CD8-positive, alpha-beta T cell (primary cell): ENCODE measurements at regions of chr1 and their contacts with region 1.

Region 1: GRCh38 chr1:160951443-160952128 is 3.0 kb downstream of the ITLN2 start:
- DNase-seq: peak; percentile 42 to 83 (median 73)
- ATAC-seq: peak; percentile 91
- H3K4me3 ChIP-seq: no peak overlapping the region
- H3K4me3 Mint-ChIP-seq: no peak overlapping the region
- H3K27ac ChIP-seq: no peak overlapping the region
- H3K27ac Mint-ChIP-seq: no peak overlapping the region
- H3K4me1 ChIP-seq: peaks cover 8% of the 10 kb centered on the region
- H3K4me1 Mint-ChIP-seq: peaks cover 12% of the 10 kb centered on the region
- H3K27me3 ChIP-seq: no peaks in the 10 kb centered on the region
- H3K27me3 Mint-ChIP-seq: no peaks in the 10 kb centered on the region
- CTCF ChIP-seq: peak; percentile 79

Region 2: DNA sequence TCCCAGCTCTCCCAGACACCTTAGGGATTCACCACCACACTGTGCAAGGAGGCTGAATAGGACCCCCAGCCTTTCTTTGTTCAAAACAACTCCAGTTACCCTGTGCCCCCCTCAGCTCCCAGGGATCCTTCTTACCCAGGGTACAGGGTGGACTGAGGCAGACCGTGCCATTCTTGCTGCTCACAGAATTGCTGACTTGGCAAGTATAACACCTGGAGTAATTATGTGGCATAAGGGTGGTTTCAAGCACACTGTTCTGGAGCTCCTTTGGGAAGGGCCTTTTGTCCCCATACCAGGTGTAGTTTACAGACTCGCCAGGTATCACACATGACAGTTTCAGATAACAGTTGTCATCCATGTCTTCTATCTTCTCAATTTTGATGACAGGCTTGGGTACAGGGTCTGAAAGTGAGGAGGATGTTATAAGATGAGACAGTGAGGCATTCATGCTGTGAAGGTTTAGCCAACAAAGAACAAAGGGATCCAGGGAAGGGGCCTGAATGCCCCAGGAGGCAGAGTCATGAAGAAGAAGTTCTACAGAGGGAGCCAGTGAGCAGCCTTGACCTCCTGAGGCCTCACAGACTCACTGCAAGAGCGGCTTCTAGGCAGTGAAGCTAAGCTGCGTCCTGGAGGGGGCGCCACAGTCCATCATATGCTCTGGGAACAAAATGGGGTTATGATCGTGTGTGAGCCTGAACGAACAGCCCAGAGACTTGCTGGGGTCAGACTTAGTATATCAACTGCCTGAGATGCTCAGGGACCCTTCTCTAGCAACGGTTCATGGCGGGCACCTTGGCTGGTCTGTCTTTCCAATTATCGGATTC is 270.3 kb before region 1 on chr1:
- CTCF ChIA-PET with region 1: interaction called, 23 read pairs
- POLR2A ChIA-PET with region 1: no interaction called
- intact Hi-C with region 1: loop called (anchors 1 kb)
- DNase-seq: peak; percentile 75 to 93 (median 91)
- ATAC-seq: peak; percentile 91
- H3K4me3 ChIP-seq: no peak overlapping the region
- H3K4me3 Mint-ChIP-seq: no peak overlapping the region
- H3K27ac ChIP-seq: peak overlapping the region; percentile 1 to 71
- H3K27ac Mint-ChIP-seq: peak overlapping the region; percentile 85
- H3K4me1 ChIP-seq: peaks cover 52% of the 10 kb centered on the region
- H3K4me1 Mint-ChIP-seq: peaks cover 54% of the 10 kb centered on the region
- H3K27me3 ChIP-seq: no peaks in the 10 kb centered on the region
- H3K27me3 Mint-ChIP-seq: no peaks in the 10 kb centered on the region
- CTCF ChIP-seq: peak; percentile 82

Region 3: GRCh38 chr1:160768295-160768657 is 183.3 kb before region 1 on chr1:
- CTCF ChIA-PET with region 1: interaction called, 47 read pairs
- POLR2A ChIA-PET with region 1: interaction called, 5 read pairs
- intact Hi-C with region 1: no loop called
- DNase-seq: peak; percentile 72 to 94 (median 85)
- ATAC-seq: peak; percentile 92
- H3K4me3 ChIP-seq: peak overlapping the region; percentile 31 to 41
- H3K4me3 Mint-ChIP-seq: peak overlapping the region; percentile 82
- H3K27ac ChIP-seq: peak overlapping the region; percentile 33 to 85
- H3K27ac Mint-ChIP-seq: peak overlapping the region; percentile 96
- H3K4me1 ChIP-seq: peaks cover 18% of the 10 kb centered on the region
- H3K4me1 Mint-ChIP-seq: peaks cover 20% of the 10 kb centered on the region
- H3K27me3 ChIP-seq: no peaks in the 10 kb centered on the region
- H3K27me3 Mint-ChIP-seq: no peaks in the 10 kb centered on the region
- CTCF ChIP-seq: peak; percentile 92

Region 4: DNA sequence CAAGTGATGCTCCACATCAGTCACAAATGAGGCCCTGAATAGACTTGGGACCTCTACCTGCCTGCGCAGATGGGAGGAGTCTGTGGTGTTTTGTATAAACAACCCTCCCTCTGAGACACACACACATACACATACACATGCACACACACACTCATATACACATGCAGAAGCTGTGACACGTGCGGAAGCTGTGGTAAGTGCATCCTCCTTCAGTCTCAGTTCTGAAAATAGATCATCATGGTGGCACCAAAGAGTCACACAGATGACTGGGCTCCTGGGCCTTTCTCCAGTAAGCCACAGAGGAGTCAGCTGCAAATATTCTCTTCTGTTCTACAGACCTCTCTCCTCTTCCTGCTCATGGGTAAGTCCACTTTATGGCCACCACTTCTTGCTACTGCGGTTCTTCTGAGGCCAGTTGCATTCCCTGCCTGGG is 155.6 kb before region 1 on chr1 and contains the start of gene LY9:
- CTCF ChIA-PET with region 1: interaction called, 10 read pairs
- POLR2A ChIA-PET with region 1: no interaction called
- intact Hi-C with region 1: no loop called
- DNase-seq: peak; percentile 65 to 97 (median 77)
- ATAC-seq: peak; percentile 90
- H3K4me3 ChIP-seq: peak within 1 kb of the TSS; percentile 71 to 74
- H3K4me3 Mint-ChIP-seq: peak within 1 kb of the TSS; percentile 97
- H3K27ac ChIP-seq: peak within 1 kb of the TSS; percentile 75 to 85
- H3K27ac Mint-ChIP-seq: peak within 1 kb of the TSS; percentile 99
- H3K4me1 ChIP-seq: peaks cover 30% of the 10 kb centered on the region
- H3K4me1 Mint-ChIP-seq: peaks cover 54% of the 10 kb centered on the region
- H3K27me3 ChIP-seq: no peaks in the 10 kb centered on the region
- H3K27me3 Mint-ChIP-seq: no peaks in the 10 kb centered on the region
- CTCF ChIP-seq: no peak
- total RNA-seq, gene LY9: 103 to 104 TPM

Region 5: GRCh38 chr1:160837558-160838205 is 113.9 kb before region 1 on chr1:
- CTCF ChIA-PET with region 1: interaction called, 189 read pairs
- POLR2A ChIA-PET with region 1: interaction called, 5 read pairs
- intact Hi-C with region 1: loop called (anchors 1 kb)
- DNase-seq: peak; percentile 70 to 96 (median 88)
- ATAC-seq: peak; percentile 91
- H3K4me3 ChIP-seq: peak overlapping the region; percentile 17 to 34
- H3K4me3 Mint-ChIP-seq: peak overlapping the region; percentile 84
- H3K27ac ChIP-seq: peak overlapping the region; percentile 54 to 77
- H3K27ac Mint-ChIP-seq: peak overlapping the region; percentile 96
- H3K4me1 ChIP-seq: peaks cover 85% of the 10 kb centered on the region
- H3K4me1 Mint-ChIP-seq: peaks cover 84% of the 10 kb centered on the region
- H3K27me3 ChIP-seq: no peaks in the 10 kb centered on the region
- H3K27me3 Mint-ChIP-seq: no peaks in the 10 kb centered on the region
- CTCF ChIP-seq: peak; percentile 27

Region 6: DNA sequence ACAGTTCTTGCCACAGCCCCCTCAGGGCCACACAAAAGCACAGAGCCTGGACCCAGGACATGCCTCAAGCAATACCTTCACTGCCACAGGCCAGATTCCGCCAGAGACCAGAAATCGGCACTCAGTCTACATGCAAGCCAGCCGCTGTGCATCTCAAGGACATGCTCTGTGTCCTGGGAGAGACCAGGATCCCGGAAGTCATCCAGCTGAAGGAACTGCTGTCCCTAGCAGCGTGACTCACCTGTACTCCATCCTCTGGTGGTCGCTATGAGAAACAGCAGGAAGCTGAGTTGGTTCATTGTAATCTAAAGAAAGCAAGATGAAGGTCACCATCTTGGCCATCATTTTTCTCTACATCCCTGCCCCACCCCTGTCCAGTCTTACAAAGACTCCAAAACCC is 67.0 kb before region 1 on chr1:
- CTCF ChIA-PET with region 1: interaction called, 12 read pairs
- POLR2A ChIA-PET with region 1: interaction called, 3 read pairs
- intact Hi-C with region 1: no loop called
- DNase-seq: peak in 2 of 9 experiments; percentile 29 to 59
- ATAC-seq: no peak
- H3K4me3 ChIP-seq: no peak overlapping the region
- H3K4me3 Mint-ChIP-seq: no peak overlapping the region
- H3K27ac ChIP-seq: no peak overlapping the region
- H3K27ac Mint-ChIP-seq: no peak overlapping the region
- H3K4me1 ChIP-seq: no peaks in the 10 kb centered on the region
- H3K4me1 Mint-ChIP-seq: peaks cover 1% of the 10 kb centered on the region
- H3K27me3 ChIP-seq: no peaks in the 10 kb centered on the region
- H3K27me3 Mint-ChIP-seq: peaks cover 4% of the 10 kb centered on the region
- CTCF ChIP-seq: peak; percentile 35

Region 7: DNA sequence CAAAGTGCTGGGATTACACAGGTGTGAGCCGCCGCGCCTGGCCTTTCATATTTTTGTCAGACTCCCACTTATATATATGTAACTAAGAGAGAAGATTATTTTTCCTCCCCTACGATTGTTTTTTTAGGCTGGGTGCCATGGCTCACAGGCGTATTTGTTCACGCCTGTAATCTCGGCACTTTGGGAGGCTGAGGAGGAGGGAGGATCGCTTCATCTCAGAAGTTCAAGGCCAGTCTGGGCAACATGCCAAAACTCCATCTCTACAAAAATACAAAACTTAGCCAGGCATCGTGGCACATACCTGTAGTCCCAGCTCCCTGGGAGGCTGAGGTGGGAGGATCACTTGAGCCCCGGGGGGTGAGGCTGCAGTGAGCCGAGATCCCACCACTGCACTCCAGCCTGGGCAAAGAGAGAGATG is 26.9 kb after region 1 on chr1:
- CTCF ChIA-PET with region 1: interaction called, 16 read pairs
- POLR2A ChIA-PET with region 1: no interaction called
- intact Hi-C with region 1: no loop called
- DNase-seq: no peak
- ATAC-seq: no peak
- H3K4me3 ChIP-seq: no peak overlapping the region
- H3K4me3 Mint-ChIP-seq: no peak overlapping the region
- H3K27ac ChIP-seq: no peak overlapping the region
- H3K27ac Mint-ChIP-seq: no peak overlapping the region
- H3K4me1 ChIP-seq: peaks cover 4% of the 10 kb centered on the region
- H3K4me1 Mint-ChIP-seq: peaks cover 13% of the 10 kb centered on the region
- H3K27me3 ChIP-seq: peaks cover 4 to 9% of the 10 kb centered on the region in 2 experiments
- H3K27me3 Mint-ChIP-seq: peaks cover 32% of the 10 kb centered on the region
- CTCF ChIP-seq: no peak

Region 8: GRCh38 chr1:161132410-161133219 is 181.0 kb after region 1 on chr1 and contains the start of gene DEDD:
- CTCF ChIA-PET with region 1: no interaction called
- POLR2A ChIA-PET with region 1: no interaction called
- intact Hi-C with region 1: no loop called
- DNase-seq: peak; percentile 75 to 97 (median 86)
- ATAC-seq: peak; percentile 93
- H3K4me3 ChIP-seq: peak within 1 kb of the TSS; percentile 66 to 97
- H3K4me3 Mint-ChIP-seq: no peak within 1 kb of the TSS
- H3K27ac ChIP-seq: peak within 1 kb of the TSS; percentile 80 to 87
- H3K27ac Mint-ChIP-seq: no peak within 1 kb of the TSS
- H3K4me1 ChIP-seq: peaks cover 52% of the 10 kb centered on the region
- H3K4me1 Mint-ChIP-seq: peaks cover 49% of the 10 kb centered on the region
- H3K27me3 ChIP-seq: no peaks in the 10 kb centered on the region
- H3K27me3 Mint-ChIP-seq: no peaks in the 10 kb centered on the region
- CTCF ChIP-seq: no peak
- total RNA-seq, gene DEDD: 32.4 to 34.6 TPM